ENCODE measurements at regions of chr16 and their contacts with region 1.

Region 1: DNA sequence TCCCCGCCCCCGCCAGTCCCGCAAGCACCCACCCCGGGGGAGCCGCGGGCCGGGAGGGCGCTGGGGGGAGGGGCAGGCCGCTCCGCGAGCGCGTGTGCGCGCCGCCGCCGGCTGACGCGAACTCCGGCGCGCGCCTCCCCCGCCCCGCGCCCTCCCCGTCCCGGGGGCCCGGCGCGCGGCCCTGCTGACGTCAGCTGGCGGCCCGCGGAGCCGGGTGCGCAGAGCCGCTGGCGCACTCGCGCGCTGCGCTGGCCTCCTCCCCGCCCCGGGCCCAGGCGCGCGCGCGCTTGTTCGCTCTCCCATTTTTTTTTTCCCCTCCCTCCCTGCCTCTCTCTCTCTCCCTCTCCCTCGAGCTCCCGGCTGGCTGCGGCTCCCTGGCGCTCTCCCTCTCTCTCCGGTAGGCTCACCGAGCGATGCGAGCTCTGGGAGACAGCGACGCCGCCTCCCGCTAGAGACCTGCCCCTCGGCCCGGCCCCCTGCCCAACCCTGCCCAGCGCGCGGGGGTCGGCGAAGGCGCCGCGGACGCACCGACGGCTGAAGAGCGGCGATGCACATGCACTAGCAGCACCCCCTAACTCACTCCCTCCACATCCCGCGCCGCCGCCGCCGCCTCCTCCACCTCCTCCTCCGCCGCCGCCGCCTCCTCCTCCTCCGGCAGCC is at the start of gene GNAO1:
- DNase-seq: peak; percentile 32 to 65 (median 65)
- ATAC-seq: peak; percentile 89
- H3K4me3 ChIP-seq: peak within 1 kb of the TSS; percentile 19
- H3K4me1 ChIP-seq: peaks cover 3% of the 10 kb centered on the region
- CTCF ChIP-seq: no peak
- total RNA-seq, gene GNAO1: 8.3 to 113 (median 9.8) TPM

Region 2: DNA sequence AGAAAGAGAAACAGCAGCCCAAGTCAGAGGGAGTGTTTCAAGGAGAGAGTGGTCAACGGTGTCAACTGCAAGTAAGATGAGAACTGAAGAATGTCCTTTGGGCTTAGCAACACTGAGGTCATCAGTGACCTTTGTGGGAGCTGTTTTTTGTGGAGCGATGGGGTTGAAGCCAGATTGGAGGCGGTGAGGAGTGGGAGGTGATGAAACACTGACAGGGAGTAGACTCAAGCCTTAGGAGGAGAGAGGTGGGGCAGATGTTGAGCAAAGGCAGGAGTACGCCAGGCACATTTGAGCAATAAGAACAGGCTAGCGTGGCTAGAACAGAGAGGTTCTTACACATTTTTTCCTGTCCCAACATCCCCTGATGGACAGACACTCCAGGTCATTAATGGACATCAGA is 103.6 kb before region 1 on chr16:
- intact Hi-C with region 1: no loop called
- DNase-seq: no peak
- ATAC-seq: no peak
- H3K4me3 ChIP-seq: no peak overlapping the region
- H3K4me1 ChIP-seq: no peaks in the 10 kb centered on the region
- CTCF ChIP-seq: no peak

Region 3: GRCh38 chr16:56102183-56102686 is 89.1 kb before region 1 on chr16:
- intact Hi-C with region 1: no loop called
- DNase-seq: peak; percentile 9 to 62 (median 21)
- ATAC-seq: peak; percentile 36
- H3K4me3 ChIP-seq: no peak overlapping the region
- H3K4me1 ChIP-seq: no peaks in the 10 kb centered on the region
- CTCF ChIP-seq: no peak

Region 4: GRCh38 chr16:56269811-56270684 is 78.8 kb after region 1 on chr16:
- intact Hi-C with region 1: loop called in 1 of 2 experiments (anchors 10 kb)
- DNase-seq: peak in 1 of 3 donors; percentile 14
- ATAC-seq: peak; percentile 66
- H3K4me3 ChIP-seq: no peak overlapping the region
- H3K4me1 ChIP-seq: no peaks in the 10 kb centered on the region
- CTCF ChIP-seq: no peak

Region 5: GRCh38 chr16:56389554-56389953 is 198.3 kb after region 1 on chr16:
- intact Hi-C with region 1: no loop called
- DNase-seq: no peak
- ATAC-seq: no peak
- H3K4me3 ChIP-seq: no peak overlapping the region
- H3K4me1 ChIP-seq: no peaks in the 10 kb centered on the region
- CTCF ChIP-seq: no peak

Measured in mucosa of descending colon (tissue), 3 donors.